ENCODE measurements at regions of chr14 and their contacts with region 1.

Region 1: DNA sequence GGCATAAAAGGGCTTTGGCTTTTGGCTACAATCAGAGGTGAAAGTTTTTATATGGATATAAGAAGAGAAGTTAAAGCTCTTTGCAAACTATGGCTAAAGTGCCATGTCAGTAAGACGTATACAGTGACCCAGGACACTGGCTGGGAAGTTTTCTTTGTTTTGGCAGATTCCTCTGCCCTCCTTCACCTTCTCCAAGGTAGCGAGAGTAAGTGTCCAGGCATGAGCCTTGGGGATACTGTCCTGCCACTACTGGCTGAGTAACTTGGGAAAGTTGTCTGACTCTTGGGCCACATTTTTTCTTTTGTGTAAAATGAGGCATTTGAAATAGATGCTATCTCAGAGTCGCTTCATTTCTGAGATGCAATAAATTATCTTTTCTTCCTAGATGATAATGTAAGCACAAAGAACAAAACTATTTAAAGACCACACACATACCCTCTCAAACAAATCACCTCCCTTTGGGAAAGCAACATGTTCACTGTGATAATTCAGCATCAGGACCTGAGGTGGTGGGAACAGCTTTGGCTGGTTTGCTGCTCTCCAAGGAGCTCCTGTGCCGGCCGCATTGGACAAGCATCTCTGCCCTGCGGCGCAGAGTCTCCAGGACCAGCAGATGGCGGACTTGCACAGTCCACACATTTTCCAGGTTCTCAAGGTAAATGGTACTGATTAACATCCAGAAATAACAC is 106.3 kb downstream of the PTCSC3 start:
- DNase-seq: peak; percentile 36
- H3K4me3 ChIP-seq: no peak overlapping the region
- CTCF ChIP-seq: peak; percentile 86

Region 2: GRCh38 chr14:35883677-35884293 is 186.4 kb before region 1 on chr14:
- CTCF ChIA-PET with region 1: interaction called, 36 read pairs
- POLR2A ChIA-PET with region 1: no interaction called
- DNase-seq: no peak
- H3K4me3 ChIP-seq: no peak overlapping the region
- CTCF ChIP-seq: peak; percentile 54

Region 3: DNA sequence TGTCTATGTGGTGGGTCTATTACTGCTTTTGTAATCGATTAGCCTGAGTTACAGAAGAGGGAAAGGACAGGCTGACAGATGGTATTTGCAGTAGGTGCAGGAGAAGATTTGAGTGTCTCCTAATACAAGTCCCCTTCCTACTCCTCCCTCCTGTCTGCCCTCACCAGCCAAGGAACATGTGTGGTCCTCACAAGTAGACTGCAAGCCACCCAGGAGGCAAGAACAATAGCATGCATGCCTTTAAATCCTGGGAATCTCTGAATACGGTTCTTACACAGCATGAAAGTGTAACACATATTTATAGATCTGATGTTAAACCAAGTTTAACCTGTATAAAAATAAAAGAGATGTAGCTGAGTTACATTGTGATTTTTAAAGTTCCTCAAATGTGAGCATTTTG is 10.6 kb before region 1 on chr14:
- CTCF ChIA-PET with region 1: interaction called, 34 read pairs
- POLR2A ChIA-PET with region 1: interaction called, 3 read pairs
- DNase-seq: no peak
- H3K4me3 ChIP-seq: no peak overlapping the region
- CTCF ChIP-seq: no peak

Region 4: DNA sequence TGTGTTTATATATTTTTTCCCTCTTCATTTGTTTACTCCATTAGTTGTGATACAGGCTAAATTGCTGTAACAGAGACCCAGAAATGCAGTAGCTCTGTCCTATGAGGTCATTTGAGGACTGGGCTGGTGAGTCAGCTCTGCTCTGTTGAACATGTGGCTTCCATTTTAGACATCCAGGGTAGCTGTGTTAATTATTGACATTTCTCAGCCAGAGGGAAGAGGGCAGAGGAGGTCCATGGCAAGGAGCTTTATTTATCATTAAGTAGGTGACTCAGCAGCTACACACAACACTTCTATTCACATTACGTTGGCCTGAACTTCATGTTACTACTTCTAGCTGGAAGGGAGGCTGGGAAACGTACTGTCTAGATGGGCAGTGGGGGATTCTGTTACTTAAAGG is 20.9 kb after region 1 on chr14:
- CTCF ChIA-PET with region 1: interaction called, 65 read pairs
- POLR2A ChIA-PET with region 1: no interaction called
- DNase-seq: peak; percentile 89
- H3K4me3 ChIP-seq: no peak overlapping the region
- CTCF ChIP-seq: no peak

Region 5: GRCh38 chr14:36320200-36320896 is 250.2 kb after region 1 on chr14 and contains the start of gene MBIP:
- CTCF ChIA-PET with region 1: interaction called, 14 read pairs
- POLR2A ChIA-PET with region 1: interaction called, 5 read pairs
- DNase-seq: peak; percentile 78
- H3K4me3 ChIP-seq: peak within 1 kb of the TSS; percentile 88
- CTCF ChIP-seq: no peak

Region 6: GRCh38 chr14:36373982-36374673 is 304.0 kb after region 1 on chr14:
- CTCF ChIA-PET with region 1: interaction called, 143 read pairs
- POLR2A ChIA-PET with region 1: no interaction called
- DNase-seq: peak; percentile 21
- H3K4me3 ChIP-seq: no peak overlapping the region
- CTCF ChIP-seq: peak; percentile 86

Region 7: DNA sequence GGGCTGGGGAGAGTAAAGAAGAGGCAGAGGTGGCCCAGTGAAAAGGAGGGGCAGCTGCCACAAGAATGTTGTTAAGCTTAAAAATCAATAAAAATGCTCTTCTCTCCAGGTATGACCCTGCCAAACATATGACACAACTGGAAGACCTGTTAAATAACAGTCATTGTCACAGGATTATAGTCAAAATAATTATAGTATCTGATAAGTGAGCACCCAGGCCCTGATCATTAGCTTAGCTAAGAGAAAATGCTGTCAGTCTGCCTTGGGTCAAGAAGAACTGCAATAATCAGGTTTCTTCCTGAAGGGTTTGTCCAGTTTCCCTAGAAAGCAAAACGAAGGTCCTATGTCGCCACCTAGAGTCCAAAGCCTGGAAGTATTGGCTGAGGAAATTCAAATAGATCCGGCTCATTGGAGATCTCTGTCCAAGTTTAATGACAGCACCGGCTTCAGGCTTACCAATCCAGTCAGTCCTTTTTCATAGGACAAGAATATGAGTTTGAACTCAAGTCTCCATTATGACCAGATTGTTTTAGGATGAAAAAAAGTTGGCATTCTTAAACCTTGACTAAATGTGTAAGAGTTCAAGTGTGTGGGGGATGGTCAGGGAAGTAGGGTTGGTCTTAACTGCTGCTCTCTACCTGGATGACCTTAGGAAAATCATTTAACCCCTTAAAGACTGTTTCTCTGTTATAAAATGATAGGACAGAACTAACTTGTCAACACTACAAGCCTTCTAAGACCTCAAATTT is 534.8 kb after region 1 on chr14:
- CTCF ChIA-PET with region 1: interaction called, 13 read pairs
- POLR2A ChIA-PET with region 1: no interaction called
- DNase-seq: peak; percentile 10
- H3K4me3 ChIP-seq: no peak overlapping the region
- CTCF ChIP-seq: peak; percentile 77

Measured in AG04449 (cell line).